ENCODE measurements at regions of chr22 and their contacts with region 1.

Region 1: DNA sequence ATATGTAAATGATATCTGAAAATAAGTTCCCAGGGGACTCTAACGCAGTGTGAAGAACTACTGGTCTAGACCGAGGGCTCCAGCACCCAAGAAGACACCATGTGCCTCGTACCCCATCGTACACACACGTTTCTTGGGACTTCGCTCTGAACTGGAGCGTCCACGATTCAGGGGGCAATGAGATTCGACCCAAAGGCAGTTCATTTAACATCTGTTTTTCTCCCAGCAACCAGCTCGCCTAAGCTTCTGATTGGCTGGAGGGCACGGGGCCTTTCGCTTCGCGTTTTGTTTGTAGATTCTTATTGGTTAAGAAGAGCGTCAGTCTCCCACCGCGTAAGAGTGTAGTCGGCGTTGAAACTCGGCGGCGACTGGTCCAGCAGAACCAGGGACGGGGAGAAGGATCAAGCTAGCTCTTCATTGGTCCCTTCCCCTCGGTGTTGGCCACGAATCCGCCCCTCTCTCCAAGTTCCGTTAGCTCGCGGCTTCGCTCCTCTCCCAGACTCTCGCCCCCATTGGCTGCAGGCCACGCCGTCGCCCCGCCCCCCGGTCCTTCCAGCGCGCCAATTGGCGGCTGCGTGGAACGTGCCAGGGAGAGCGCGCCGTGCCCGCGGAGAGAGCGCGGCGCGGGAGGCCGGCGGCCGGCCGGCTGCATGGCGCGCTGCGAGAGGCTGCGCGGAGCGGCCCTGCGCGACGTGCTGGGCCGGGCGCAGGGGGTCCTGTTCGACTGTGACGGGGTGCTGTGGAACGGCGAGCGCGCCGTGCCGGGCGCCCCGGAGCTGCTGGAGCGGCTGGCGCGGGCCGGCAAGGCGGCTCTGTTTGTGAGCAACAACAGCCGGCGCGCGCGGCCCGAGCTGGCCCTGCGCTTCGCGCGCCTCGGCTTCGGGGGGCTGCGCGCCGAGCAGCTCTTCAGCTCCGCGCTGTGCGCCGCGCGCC is at the start of gene PDXP:
- DNase-seq: peak; percentile 100
- H3K4me3 ChIP-seq: peak within 1 kb of the TSS; percentile 78
- CTCF ChIP-seq: no peak

Region 2: DNA sequence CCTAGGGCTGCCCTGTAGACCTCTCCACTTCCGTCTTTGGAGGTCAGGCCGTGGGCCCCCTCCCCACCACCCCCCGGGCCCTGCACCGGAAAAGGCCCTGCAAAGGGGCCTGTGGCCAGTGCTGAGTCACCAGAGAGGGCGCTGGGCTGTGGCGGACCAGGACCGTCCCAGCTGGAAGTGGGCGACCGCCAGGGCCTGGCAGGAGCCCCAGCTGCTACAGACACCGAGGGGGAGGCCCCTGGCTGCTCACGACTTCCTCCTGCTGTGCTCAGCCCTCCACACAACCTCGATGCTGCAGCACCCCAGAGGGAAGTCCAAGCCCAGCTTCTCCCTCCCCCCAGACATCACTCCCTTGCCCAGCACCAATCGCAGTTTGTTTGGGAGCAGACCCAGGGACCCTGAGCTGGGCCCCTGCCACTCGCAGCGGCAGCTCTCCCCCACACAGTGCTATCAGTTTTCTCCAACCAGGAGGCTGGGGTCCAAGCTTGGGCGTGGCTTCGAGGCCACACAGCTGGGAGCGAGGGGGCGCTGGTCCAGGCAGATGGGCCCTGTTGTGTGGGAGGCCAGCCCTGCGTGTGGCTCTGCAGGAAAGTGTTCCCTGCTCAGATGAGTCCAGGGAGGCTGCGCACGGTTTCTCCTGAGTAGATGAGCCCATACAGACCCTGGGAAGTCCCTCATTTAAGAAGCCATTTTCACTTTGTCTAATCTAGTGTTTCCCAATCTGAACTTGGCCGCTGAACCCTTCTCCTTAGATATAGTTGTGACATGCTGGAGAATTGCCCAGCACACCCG is 24.6 kb before region 1 on chr22:
- CTCF ChIA-PET with region 1: interaction called, 430 read pairs
- POLR2A ChIA-PET with region 1: interaction called, 6 read pairs
- DNase-seq: peak; percentile 42
- H3K4me3 ChIP-seq: no peak overlapping the region; the same call in 1 of the 2 replicates
- CTCF ChIP-seq: peak; percentile 39

Region 3: GRCh38 chr22:37696657-37697537 is 38.5 kb after region 1 on chr22 and contains the start of gene TRIOBP:
- CTCF ChIA-PET with region 1: interaction called, 21 read pairs
- POLR2A ChIA-PET with region 1: no interaction called
- DNase-seq: peak; percentile 72
- H3K4me3 ChIP-seq: peak within 1 kb of the TSS; percentile 64
- CTCF ChIP-seq: peak; percentile 63

Measured in AG04449 (cell line).